Esophagus muscularis mucosa (tissue), 4 donors: ENCODE measurements at regions of chr1 and their contacts with region 1.

Region 1: GRCh38 chr1:186680245-186681061 is at the start of gene PTGS2:
- DNase-seq: peak; percentile 95
- H3K4me3 ChIP-seq: peak within 1 kb of the TSS; percentile 65 to 83 (median 74)
- H3K27ac ChIP-seq: peak within 1 kb of the TSS; percentile 89 to 94 (median 92)
- H3K4me1 ChIP-seq: peaks cover 0 to 25% (median 22%) of the 10 kb centered on the region in 4 donors
- H3K27me3 ChIP-seq: no peaks in the 10 kb centered on the region
- CTCF ChIP-seq: peak; percentile 46 to 56 (median 48)
- EP300 ChIP-seq: no peak
- POLR2A ChIP-seq: peak; percentile 31
- total RNA-seq, gene PTGS2: 2.7 to 18.6 (median 4.3) TPM

Region 2: DNA sequence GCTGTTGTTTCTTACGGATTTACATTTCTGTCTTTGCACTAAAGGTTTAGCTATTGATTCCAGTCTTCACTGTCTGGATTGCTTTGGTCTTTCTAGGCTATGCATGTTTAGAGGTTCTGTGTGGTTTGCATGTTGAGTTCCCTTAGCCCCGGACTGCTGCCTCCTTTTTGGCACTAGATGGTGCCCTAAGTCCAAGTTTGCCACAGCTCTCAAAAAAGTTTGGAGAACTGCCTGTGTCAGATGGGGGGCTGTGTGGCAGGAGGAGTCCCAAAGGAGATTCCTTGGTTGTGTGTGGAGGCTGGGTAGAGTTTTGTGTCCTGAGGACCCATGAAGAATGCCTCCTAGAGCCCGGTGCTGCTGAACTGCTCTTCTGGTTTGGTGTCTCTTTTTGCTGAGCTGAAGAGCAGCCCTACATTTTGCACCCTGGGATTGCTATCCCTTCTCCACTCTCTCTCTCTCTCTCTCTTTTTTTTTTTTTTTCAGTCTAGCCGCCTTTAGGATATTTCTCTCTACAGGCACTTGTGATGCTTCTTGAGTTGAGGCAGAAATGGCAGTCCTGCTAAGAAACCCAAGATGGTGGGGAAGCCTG is 74.6 kb before region 1 on chr1:
- intact Hi-C with region 1: loop called (anchors 5 kb)
- DNase-seq: no peak
- H3K4me3 ChIP-seq: no peak overlapping the region
- H3K27ac ChIP-seq: no peak overlapping the region
- H3K4me1 ChIP-seq: peaks cover 0 to 4% (median 0%) of the 10 kb centered on the region in 4 donors
- H3K27me3 ChIP-seq: no peaks in the 10 kb centered on the region
- CTCF ChIP-seq: peak; percentile 52 to 69 (median 68)
- EP300 ChIP-seq: no peak
- POLR2A ChIP-seq: no peak

Region 3: DNA sequence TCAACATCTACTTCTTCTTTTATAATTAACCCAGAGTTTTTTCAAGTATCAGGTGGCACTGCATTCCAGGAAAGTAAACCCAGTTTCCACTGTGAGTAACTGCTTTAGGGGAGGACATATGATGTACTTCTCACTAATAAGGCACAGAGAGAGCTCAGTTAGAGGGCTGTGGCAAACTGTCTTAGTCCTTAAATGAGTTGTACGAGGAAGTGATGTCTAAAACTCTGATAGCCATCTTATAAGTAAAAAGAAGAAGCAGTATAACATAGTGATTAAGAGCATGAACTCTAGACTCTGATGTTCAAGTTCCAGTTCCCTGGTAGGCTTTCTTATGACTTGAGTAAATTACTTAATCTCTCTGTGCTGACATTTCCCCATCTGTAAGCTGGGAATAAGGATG is 58.5 kb after region 1 on chr1:
- intact Hi-C with region 1: no loop called
- DNase-seq: no peak
- H3K4me3 ChIP-seq: no peak overlapping the region
- H3K27ac ChIP-seq: no peak overlapping the region
- H3K4me1 ChIP-seq: no peaks in the 10 kb centered on the region
- H3K27me3 ChIP-seq: no peaks in the 10 kb centered on the region
- CTCF ChIP-seq: no peak
- EP300 ChIP-seq: no peak
- POLR2A ChIP-seq: no peak